ENCODE measurements at regions of chr17 and their contacts with region 1.

Region 1: GRCh38 chr17:76027159-76027839 is at the start of gene EVPL:
- DNase-seq: peak; percentile 94
- H3K4me3 Mint-ChIP-seq: peak within 1 kb of the TSS; percentile 97
- H3K27ac Mint-ChIP-seq: peak within 1 kb of the TSS; percentile 71
- H3K4me1 Mint-ChIP-seq: peaks cover 23% of the 10 kb centered on the region
- H3K27me3 Mint-ChIP-seq: no peaks in the 10 kb centered on the region
- CTCF ChIP-seq: no peak
- total RNA-seq, gene EVPL: 51.8 and 59.7 TPM in 2 replicates

Region 2: GRCh38 chr17:76072148-76072858 is 45.0 kb after region 1 on chr17 and contains the start of gene SRP68:
- CTCF ChIA-PET with region 1: no interaction called
- intact Hi-C with region 1: loop called (anchors 5 kb)
- DNase-seq: peak; percentile 95
- H3K4me3 Mint-ChIP-seq: peak within 1 kb of the TSS; percentile 87
- H3K27ac Mint-ChIP-seq: peak within 1 kb of the TSS; percentile 73
- H3K4me1 Mint-ChIP-seq: peaks cover 11% of the 10 kb centered on the region
- H3K27me3 Mint-ChIP-seq: peaks cover 31% of the 10 kb centered on the region
- CTCF ChIP-seq: no peak
- total RNA-seq, gene SRP68: 80.7 and 84.5 TPM in 2 replicates